ENCODE measurements at regions of chr4 and their contacts with region 1.

Region 1: GRCh38 chr4:121462660-121463261 is 81.9 kb upstream of the QRFPR start:
- DNase-seq: peak; percentile 54
- H3K4me3 ChIP-seq: no peak overlapping the region
- H3K27ac ChIP-seq: no peak overlapping the region
- H3K4me1 ChIP-seq: no peaks in the 10 kb centered on the region
- H3K27me3 ChIP-seq: no peaks in the 10 kb centered on the region
- CTCF ChIP-seq: peak; percentile 77 to 87

Region 2: GRCh38 chr4:121122661-121123060 is 340.1 kb before region 1 on chr4:
- CTCF ChIA-PET with region 1: no interaction called
- dilution Hi-C with region 1: no loop called
- in situ Hi-C with region 1: no loop called
- intact Hi-C with region 1: no loop called
- DNase-seq: no peak
- H3K4me3 ChIP-seq: no peak overlapping the region
- H3K27ac ChIP-seq: no peak overlapping the region
- H3K4me1 ChIP-seq: no peaks in the 10 kb centered on the region
- H3K27me3 ChIP-seq: no peaks in the 10 kb centered on the region
- CTCF ChIP-seq: no peak

Region 3: DNA sequence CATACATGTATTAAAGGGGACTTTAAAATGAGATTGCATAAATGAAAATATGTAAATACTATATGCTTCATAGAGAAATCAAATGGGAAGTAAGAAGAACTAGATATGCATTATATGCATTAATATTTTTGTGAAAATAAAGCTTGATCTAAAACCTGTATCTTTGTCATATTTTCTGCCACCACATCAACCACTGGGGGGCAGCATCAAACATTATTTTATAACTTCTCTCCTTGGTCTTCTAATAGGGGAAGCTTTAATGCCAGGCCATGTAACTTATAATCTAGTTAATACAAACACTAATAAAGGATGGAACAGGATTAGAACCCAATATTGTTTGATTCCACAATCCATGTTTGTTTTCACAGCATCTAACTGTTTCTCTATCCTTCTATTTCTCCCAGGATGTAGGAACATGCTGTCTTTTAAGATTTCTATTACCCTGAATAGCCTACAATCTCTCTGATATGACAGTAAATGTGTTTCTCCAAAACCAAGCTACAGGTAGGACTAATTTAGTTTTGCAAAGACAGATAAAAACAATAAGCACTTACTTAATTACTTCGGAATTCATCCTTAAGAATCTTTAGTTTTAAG is 91.9 kb before region 1 on chr4:
- CTCF ChIA-PET with region 1: interaction called, 4 read pairs
- dilution Hi-C with region 1: no loop called
- in situ Hi-C with region 1: no loop called
- intact Hi-C with region 1: loop called (anchors 2 kb)
- DNase-seq: peak; percentile 28
- H3K4me3 ChIP-seq: no peak overlapping the region
- H3K27ac ChIP-seq: no peak overlapping the region
- H3K4me1 ChIP-seq: peaks cover 30% of the 10 kb centered on the region
- H3K27me3 ChIP-seq: no peaks in the 10 kb centered on the region
- CTCF ChIP-seq: peak; percentile 59 to 71

Region 4: GRCh38 chr4:121668368-121669162 is 205.8 kb after region 1 on chr4:
- CTCF ChIA-PET with region 1: no interaction called
- dilution Hi-C with region 1: no loop called
- in situ Hi-C with region 1: loop called in 1 of 2 experiments (anchors 10 kb)
- intact Hi-C with region 1: no loop called
- DNase-seq: peak; percentile 86
- H3K4me3 ChIP-seq: no peak overlapping the region
- H3K27ac ChIP-seq: peak overlapping the region; percentile 55
- H3K4me1 ChIP-seq: peaks cover 9% of the 10 kb centered on the region
- H3K27me3 ChIP-seq: no peaks in the 10 kb centered on the region
- CTCF ChIP-seq: no peak

Region 5: GRCh38 chr4:121736735-121737351 is 274.1 kb after region 1 on chr4:
- CTCF ChIA-PET with region 1: interaction called, 14 read pairs
- dilution Hi-C with region 1: no loop called
- in situ Hi-C with region 1: loop called in 1 of 2 experiments (anchors 10 kb)
- intact Hi-C with region 1: loop called (anchors 1 kb)
- DNase-seq: peak; percentile 47
- H3K4me3 ChIP-seq: no peak overlapping the region
- H3K27ac ChIP-seq: no peak overlapping the region
- H3K4me1 ChIP-seq: no peaks in the 10 kb centered on the region
- H3K27me3 ChIP-seq: no peaks in the 10 kb centered on the region
- CTCF ChIP-seq: peak; percentile 59 to 67

Region 6: GRCh38 chr4:121811122-121811521 is 348.4 kb after region 1 on chr4:
- CTCF ChIA-PET with region 1: no interaction called
- dilution Hi-C with region 1: no loop called
- in situ Hi-C with region 1: no loop called
- intact Hi-C with region 1: no loop called
- DNase-seq: no peak
- H3K4me3 ChIP-seq: no peak overlapping the region
- H3K27ac ChIP-seq: no peak overlapping the region
- H3K4me1 ChIP-seq: no peaks in the 10 kb centered on the region
- H3K27me3 ChIP-seq: no peaks in the 10 kb centered on the region
- CTCF ChIP-seq: no peak